ENCODE measurements at regions of chr6 and their contacts with region 1.

Region 1: DNA sequence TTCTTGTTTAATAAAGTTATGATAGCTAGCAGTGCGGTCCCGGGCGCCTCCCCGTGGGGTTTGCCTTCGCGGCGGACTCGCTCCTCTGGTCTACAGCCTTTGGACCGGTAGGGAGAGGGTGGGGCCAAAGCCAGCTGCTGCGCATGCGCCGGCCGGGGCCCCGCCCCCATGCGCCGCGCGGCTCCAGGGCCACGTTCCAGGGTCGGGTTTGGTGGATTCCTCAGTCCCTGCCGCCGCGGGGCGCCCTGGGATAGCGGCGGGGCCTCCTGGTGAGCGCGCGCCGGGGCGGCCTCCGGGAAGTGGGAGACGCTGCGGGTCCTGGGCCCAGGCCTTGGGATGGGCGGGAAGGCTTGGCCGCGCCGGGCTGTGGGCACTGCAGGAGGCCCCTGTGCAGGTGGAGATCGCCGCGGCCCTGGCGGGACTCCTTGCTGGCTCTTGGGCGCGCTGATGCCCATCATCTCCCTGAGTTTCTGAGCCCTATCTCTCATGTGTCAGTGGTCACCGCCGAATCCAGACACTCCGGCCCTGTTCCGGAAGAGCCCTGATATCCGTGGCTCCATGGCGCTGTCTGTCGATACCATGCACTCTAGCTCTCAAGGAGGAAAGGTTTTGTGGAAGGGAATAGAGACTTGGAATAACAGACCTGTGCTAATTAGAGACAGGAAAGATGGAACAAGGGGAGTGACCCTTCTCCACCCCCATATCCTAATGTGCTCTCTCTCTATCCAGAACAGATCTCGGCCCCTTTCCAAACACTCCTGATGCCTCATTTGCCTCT is at the start of gene VARS2:
- DNase-seq: peak; percentile 96
- total RNA-seq, gene VARS2: 24.7 TPM

Region 2: GRCh38 chr6:30828027-30828960 is 86.0 kb before region 1 on chr6:
- intact Hi-C with region 1: loop called (anchors 2 kb)
- DNase-seq: peak; percentile 94

Region 3: GRCh38 chr6:30877419-30878371 is 36.6 kb before region 1 on chr6:
- intact Hi-C with region 1: loop called (anchors 5 kb)
- DNase-seq: peak; percentile 91

Region 4: GRCh38 chr6:30935018-30935417 is 20.8 kb after region 1 on chr6:
- intact Hi-C with region 1: no loop called
- DNase-seq: no peak

Region 5: DNA sequence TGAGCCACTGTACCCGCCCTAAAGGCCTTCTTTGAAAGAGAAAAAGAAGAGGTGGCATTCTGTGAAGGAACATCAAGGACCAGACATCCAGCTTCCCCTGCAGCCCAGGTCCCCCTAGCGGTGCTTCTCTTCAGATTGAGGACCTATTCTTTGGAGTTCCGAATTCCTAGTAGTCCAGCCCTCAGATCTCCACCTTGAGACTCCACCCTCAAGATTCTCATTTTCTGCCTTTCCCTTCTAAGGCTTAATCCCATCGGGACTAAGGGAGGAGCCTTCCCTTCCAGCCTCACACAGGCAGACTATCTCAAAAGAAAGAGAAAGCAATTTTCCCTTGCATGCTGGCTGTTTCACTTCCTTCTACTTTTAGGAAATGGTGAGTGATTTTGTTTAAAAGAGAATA is 128.5 kb after region 1 on chr6:
- intact Hi-C with region 1: loop called (anchors 1 kb)
- DNase-seq: no peak

Region 6: GRCh38 chr6:31070711-31071197 is 156.5 kb after region 1 on chr6:
- intact Hi-C with region 1: loop called (anchors 1 kb)
- DNase-seq: no peak

Measured in cardiac septum (tissue), 1 donor.